HCT116 (cell line): ENCODE measurements at regions of chr7 and their contacts with region 1.

Region 1: DNA sequence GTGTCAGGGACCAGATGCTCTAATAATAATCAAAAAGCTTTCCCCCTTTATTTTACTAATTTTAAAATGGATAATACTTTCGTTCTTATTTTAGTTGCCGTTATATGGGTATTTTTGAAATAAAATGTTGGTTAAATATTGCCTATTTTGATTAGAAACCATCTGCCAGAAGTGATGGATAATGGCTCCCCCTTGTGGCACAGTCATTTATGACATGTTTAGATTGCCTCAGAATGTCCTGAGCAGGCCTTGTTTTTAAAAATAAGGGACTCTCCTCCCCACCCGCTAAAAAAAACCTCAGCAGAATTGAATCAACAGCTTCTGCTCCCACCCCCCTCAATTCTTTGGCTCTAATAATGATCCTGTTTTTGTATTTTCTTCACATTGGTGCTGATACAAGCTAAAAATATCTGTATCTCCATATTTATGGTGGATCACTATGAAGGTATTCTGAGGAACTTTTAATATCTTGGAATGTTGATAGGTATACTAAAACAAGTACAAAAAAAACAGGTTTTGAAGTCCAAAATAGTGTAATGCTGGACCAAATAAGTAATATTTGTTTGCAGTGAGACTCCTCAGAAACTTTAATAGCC is 38.8 kb downstream of the TMEM60 start:
- DNase-seq: peak; percentile 57
- ATAC-seq: peak; percentile 78
- H3K4me3 ChIP-seq: no peak overlapping the region
- H3K27ac ChIP-seq: no peak overlapping the region
- H3K4me1 ChIP-seq: no peaks in the 10 kb centered on the region
- H3K27me3 ChIP-seq: no peaks in the 10 kb centered on the region
- CTCF ChIP-seq: peak; percentile 67 to 80 (median 79); a peak in 5 of 6 replicates
- POLR2A ChIP-seq: no peak
- RAD21 ChIP-seq: peak; percentile 89

Region 2: DNA sequence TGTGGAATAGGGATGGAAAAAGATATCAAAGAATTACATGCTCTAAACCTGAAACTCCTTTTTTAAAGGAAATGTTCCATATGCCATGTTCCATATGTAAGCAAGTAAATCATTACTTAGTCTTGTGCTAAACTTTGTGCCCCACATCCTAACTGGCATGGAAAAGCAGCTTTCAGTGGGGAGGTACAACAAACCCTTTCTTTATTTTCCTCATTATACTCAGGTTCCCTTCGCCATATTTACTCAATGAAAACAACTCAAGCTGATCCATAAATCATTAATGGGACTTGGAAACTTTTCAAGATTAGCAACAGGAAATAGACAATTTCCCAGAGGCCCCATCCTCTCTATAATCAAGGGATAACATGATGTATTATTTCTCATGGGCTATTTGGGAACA is 399.3 kb before region 1 on chr7:
- CTCF ChIA-PET with region 1: no interaction called
- POLR2A ChIA-PET with region 1: no interaction called
- RAD21 ChIA-PET with region 1: no interaction called
- intact Hi-C with region 1: no loop called
- DNase-seq: no peak
- ATAC-seq: no peak
- H3K4me3 ChIP-seq: no peak overlapping the region
- H3K27ac ChIP-seq: no peak overlapping the region
- H3K4me1 ChIP-seq: no peaks in the 10 kb centered on the region
- H3K27me3 ChIP-seq: no peaks in the 10 kb centered on the region
- CTCF ChIP-seq: no peak
- POLR2A ChIP-seq: no peak
- RAD21 ChIP-seq: no peak

Region 3: DNA sequence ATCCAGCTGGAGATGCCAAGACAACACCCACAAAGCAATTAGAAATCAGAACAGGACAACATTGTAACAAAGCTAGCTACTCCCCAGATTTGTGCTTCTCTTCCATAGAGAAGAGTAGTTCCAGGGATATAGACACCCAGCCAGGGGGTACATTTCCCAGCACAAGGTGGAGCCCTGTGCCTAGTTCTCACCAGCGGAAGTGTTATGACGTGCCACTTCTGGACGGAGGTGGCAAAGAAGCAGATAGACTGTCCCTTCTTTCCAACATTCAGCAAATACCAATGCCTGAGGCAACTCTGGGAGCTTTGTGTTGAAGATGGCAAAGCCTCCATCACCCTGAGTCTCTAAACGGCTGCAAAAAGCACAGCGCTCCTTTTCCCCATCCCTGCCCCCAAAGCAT is 319.8 kb before region 1 on chr7:
- CTCF ChIA-PET with region 1: no interaction called
- POLR2A ChIA-PET with region 1: no interaction called
- RAD21 ChIA-PET with region 1: no interaction called
- intact Hi-C with region 1: loop called (anchors 5 kb)
- DNase-seq: no peak
- ATAC-seq: peak; percentile 90
- H3K4me3 ChIP-seq: no peak overlapping the region
- H3K27ac ChIP-seq: no peak overlapping the region
- H3K4me1 ChIP-seq: no peaks in the 10 kb centered on the region
- H3K27me3 ChIP-seq: no peaks in the 10 kb centered on the region
- CTCF ChIP-seq: peak; percentile 34 to 42 (median 41); a peak in 4 of 6 replicates
- POLR2A ChIP-seq: no peak
- RAD21 ChIP-seq: peak; percentile 70

Region 4: DNA sequence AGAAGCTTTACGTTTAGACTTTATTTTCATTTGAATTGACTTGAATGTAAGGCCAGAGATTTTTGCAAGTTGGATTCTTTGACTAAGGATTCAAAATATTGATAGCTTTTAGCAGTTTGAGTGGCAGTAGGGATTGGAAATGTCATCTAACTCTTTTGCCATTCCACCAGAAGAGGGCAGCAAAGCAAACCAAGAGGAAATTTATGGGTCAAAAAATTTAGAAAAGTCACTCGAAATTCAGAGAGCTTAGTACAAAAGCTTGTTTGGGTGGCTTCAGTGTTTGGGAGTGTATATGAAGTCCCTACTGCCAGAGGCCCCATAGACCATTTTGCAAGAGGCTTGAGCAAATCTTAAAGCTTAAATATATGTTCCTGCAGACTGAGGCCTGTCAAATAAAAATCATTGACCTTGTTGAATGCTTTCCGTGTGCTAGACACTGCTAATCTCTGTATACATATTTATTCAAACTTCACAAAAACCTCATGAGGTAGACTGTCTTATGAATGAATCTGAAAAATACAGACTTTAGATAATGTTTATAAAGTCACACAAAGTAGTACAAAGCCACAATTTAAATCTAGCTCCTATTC is 107.7 kb before region 1 on chr7:
- CTCF ChIA-PET with region 1: interaction called, 17 read pairs
- POLR2A ChIA-PET with region 1: no interaction called
- RAD21 ChIA-PET with region 1: no interaction called
- intact Hi-C with region 1: no loop called
- DNase-seq: peak; percentile 13
- ATAC-seq: peak; percentile 59
- H3K4me3 ChIP-seq: no peak overlapping the region
- H3K27ac ChIP-seq: no peak overlapping the region
- H3K4me1 ChIP-seq: no peaks in the 10 kb centered on the region
- H3K27me3 ChIP-seq: no peaks in the 10 kb centered on the region
- CTCF ChIP-seq: peak; percentile 54 to 80 (median 63)
- POLR2A ChIP-seq: no peak
- RAD21 ChIP-seq: peak; percentile 67

Region 5: GRCh38 chr7:77657427-77658224 is 101.8 kb before region 1 on chr7:
- CTCF ChIA-PET with region 1: interaction called, 12 read pairs
- POLR2A ChIA-PET with region 1: no interaction called
- RAD21 ChIA-PET with region 1: no interaction called
- intact Hi-C with region 1: loop called (anchors 1 kb)
- DNase-seq: peak; percentile 35
- ATAC-seq: peak; percentile 78
- H3K4me3 ChIP-seq: no peak overlapping the region
- H3K27ac ChIP-seq: no peak overlapping the region
- H3K4me1 ChIP-seq: no peaks in the 10 kb centered on the region
- H3K27me3 ChIP-seq: no peaks in the 10 kb centered on the region
- CTCF ChIP-seq: peak; percentile 43 to 75 (median 58); a peak in 5 of 6 replicates
- POLR2A ChIP-seq: no peak
- RAD21 ChIP-seq: peak; percentile 85

Region 6: GRCh38 chr7:77696198-77697028 is 63.0 kb before region 1 on chr7 and contains the start of gene RSBN1L:
- CTCF ChIA-PET with region 1: no interaction called
- POLR2A ChIA-PET with region 1: interaction called, 3 read pairs
- RAD21 ChIA-PET with region 1: no interaction called
- intact Hi-C with region 1: loop called (anchors 1 kb)
- DNase-seq: peak; percentile 92
- ATAC-seq: peak; percentile 97
- H3K4me3 ChIP-seq: peak within 1 kb of the TSS; percentile 94 to 97
- H3K27ac ChIP-seq: peak within 1 kb of the TSS; percentile 90
- H3K4me1 ChIP-seq: peaks cover 5 to 17% of the 10 kb centered on the region in 2 experiments; a peak in 2 of 4 replicates
- H3K27me3 ChIP-seq: no peaks in the 10 kb centered on the region
- CTCF ChIP-seq: peak in 2 of 3 experiments; percentile 30 to 39; a peak in 2 of 6 replicates
- POLR2A ChIP-seq: no peak
- RAD21 ChIP-seq: no peak
- total RNA-seq, gene RSBN1L: 15.5 TPM